ENCODE measurements at regions of chr14 and their contacts with region 1.

Region 1: GRCh38 chr14:22375321-22375930 is 213.6 kb downstream of the DAD1 start:
- DNase-seq: peak in 1 of 6 donors; percentile 25
- ATAC-seq: peak in 3 of 4 donors; percentile 66 to 76 (median 71)
- H3K4me3 ChIP-seq: no peak overlapping the region
- H3K27ac ChIP-seq: no peak overlapping the region
- H3K4me1 ChIP-seq: peaks cover 0 to 3% (median 0%) of the 10 kb centered on the region in 3 donors
- H3K27me3 ChIP-seq: peaks cover 0 to 3% (median 0%) of the 10 kb centered on the region in 4 donors
- CTCF ChIP-seq: peak in 2 of 4 donors; percentile 24 to 35

Region 2: DNA sequence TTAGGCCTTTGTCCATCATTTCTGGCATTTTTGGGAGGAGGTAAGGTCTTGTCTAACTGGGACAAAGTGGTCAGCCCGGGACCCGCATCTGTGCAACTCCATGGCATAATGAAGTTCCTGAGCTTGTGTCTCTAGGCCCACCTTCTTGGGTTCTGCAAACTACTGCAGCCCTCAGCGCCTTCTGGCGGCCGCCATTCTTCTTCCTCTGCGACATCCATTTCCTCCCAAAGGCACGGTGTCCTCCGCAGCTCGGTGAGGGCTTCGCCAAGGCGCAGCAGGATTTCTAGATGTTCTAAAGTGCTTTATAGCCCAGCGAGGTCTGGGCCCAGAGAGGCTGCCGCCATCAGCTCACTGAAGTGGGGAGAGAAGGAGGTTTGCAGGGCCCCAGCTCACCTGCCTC is 567.5 kb before region 1 on chr14:
- intact Hi-C with region 1: no loop called
- DNase-seq: no peak
- ATAC-seq: no peak
- H3K4me3 ChIP-seq: no peak overlapping the region
- H3K27ac ChIP-seq: no peak overlapping the region
- H3K4me1 ChIP-seq: no peaks in the 10 kb centered on the region
- H3K27me3 ChIP-seq: no peaks in the 10 kb centered on the region
- CTCF ChIP-seq: no peak

Region 3: DNA sequence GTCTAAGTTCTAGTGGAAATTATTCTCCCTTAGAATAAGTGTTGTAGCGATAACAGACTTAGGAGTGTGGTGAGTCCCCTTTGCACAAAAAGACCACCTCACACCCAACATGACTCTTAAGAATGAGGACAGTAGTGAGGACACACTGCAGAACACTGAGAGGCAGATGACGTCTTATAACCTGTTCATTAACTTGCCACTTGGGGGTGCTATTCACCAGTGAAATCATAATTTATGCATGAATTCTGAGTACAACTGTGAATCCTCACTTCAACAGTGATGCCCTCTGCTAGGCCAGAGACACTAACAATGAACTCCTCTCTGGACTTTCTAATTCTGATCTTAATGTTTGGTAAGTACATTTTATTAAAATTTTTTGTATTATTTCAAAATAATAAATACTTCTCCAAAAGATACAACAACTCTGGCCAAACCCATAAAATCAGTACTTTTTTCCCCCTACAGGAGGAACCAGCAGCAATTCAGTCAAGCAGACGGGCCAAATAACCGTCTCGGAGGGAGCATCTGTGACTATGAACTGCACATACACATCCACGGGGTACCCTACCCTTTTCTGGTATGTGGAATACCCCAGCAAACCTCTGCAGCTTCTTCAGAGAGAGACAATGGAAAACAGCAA is 61.1 kb before region 1 on chr14:
- intact Hi-C with region 1: loop called in 1 of 3 experiments (anchors 10 kb)
- DNase-seq: peak in 1 of 6 donors; percentile 21
- ATAC-seq: peak; percentile 31 to 85 (median 82)
- H3K4me3 ChIP-seq: no peak overlapping the region
- H3K27ac ChIP-seq: no peak overlapping the region
- H3K4me1 ChIP-seq: no peaks in the 10 kb centered on the region
- H3K27me3 ChIP-seq: no peaks in the 10 kb centered on the region
- CTCF ChIP-seq: peak in 3 of 4 donors; percentile 36 to 56 (median 55)